ENCODE measurements at regions of chr6 and their contacts with region 1.

Region 1: GRCh38 chr6:130381459-130382380 is 15.9 kb downstream of the TMEM200A start:
- DNase-seq: peak; percentile 74
- ATAC-seq: peak; percentile 94
- H3K4me3 Mint-ChIP-seq: no peak overlapping the region
- H3K27ac Mint-ChIP-seq: peak overlapping the region; percentile 66
- H3K4me1 Mint-ChIP-seq: peaks cover 30% of the 10 kb centered on the region
- H3K27me3 Mint-ChIP-seq: no peaks in the 10 kb centered on the region

Region 2: GRCh38 chr6:130365166-130366106 is 16.3 kb before region 1 on chr6 and contains the start of gene TMEM200A:
- CTCF ChIA-PET with region 1: interaction called, 11 read pairs
- DNase-seq: peak; percentile 55
- ATAC-seq: peak; percentile 75
- H3K4me3 Mint-ChIP-seq: peak within 1 kb of the TSS; percentile 65
- H3K27ac Mint-ChIP-seq: peak within 1 kb of the TSS; percentile 19
- H3K4me1 Mint-ChIP-seq: peaks cover 23% of the 10 kb centered on the region
- H3K27me3 Mint-ChIP-seq: peaks cover 34% of the 10 kb centered on the region
- total RNA-seq, gene TMEM200A: 3.0 to 5.0 TPM

Region 3: DNA sequence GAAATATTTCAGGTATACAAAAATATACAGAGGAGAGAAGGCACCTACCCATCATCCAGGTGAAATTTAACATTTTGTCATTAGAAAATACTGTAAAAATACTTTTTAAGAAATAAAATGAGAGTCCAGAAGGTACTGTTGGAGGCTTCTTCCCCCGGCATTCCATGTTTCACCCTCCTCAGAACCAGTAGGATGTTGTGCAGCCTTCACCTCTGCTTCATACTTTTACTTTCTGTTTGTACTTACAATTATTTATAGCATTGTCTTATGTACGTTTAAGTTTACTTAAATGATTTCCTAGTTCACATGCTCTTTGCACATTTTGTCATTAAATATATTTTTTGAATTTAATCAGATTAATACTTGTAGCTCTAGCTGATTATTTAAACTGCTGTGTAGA is 15.0 kb after region 1 on chr6:
- CTCF ChIA-PET with region 1: interaction called, 14 read pairs
- DNase-seq: no peak
- ATAC-seq: peak; percentile 70
- H3K4me3 Mint-ChIP-seq: peak overlapping the region; percentile 57
- H3K27ac Mint-ChIP-seq: peak overlapping the region; percentile 69
- H3K4me1 Mint-ChIP-seq: peaks cover 22% of the 10 kb centered on the region
- H3K27me3 Mint-ChIP-seq: no peaks in the 10 kb centered on the region

Region 4: DNA sequence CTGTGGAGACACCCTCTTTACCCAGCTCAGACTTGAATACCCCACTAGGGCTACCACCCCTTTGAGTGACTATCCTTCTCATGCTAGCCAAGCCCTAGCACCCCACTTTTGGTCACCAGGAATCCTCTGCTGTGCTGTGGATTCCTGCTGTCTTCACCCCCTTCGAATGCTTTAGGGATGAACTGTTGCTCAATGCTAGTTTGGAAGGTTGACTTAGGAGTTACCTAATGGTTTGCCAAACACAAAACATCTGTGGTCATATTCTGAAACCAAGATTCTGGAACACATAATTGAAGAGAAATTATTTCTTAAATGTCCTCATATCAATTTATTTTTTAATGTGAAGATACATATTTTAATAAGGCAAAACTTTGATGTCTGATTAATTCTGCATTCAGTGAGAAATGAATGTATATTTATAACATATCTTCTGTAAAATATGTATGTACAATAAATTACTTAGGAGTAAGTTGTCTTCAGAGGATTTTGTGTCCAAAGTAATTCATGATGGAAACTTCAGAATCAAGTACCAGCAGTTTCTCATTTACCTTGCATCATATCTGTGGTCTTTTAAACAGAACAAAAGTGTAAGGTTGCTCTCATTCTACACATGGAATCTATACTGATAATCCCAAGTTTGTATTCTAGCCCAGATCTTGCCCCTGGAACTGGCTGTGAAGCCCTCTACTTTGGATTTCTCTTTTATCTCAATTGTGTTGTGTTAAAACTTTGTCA is 31.0 kb after region 1 on chr6:
- CTCF ChIA-PET with region 1: no interaction called
- DNase-seq: no peak
- ATAC-seq: no peak
- H3K4me3 Mint-ChIP-seq: no peak overlapping the region
- H3K27ac Mint-ChIP-seq: no peak overlapping the region
- H3K4me1 Mint-ChIP-seq: peaks cover 2% of the 10 kb centered on the region
- H3K27me3 Mint-ChIP-seq: no peaks in the 10 kb centered on the region

Measured in activated CD8-positive, alpha-beta memory T cell treated with anti-CD3 and anti-CD28 coated beads, Interleukin-2, amount 10 ng/mL, durations not matched to agents 7 days and 5 days (primary cell).